Ovary (tissue), 10 donors: ENCODE measurements at regions of chr16 and their contacts with region 1.

Region 1: GRCh38 chr16:600781-601180 is 10.9 kb downstream of the RAB40C start:
- DNase-seq: no peak
- H3K4me3 ChIP-seq: no peak overlapping the region
- H3K27ac ChIP-seq: no peak overlapping the region
- H3K4me1 ChIP-seq: no peaks in the 10 kb centered on the region
- H3K27me3 ChIP-seq: no peaks in the 10 kb centered on the region
- CTCF ChIP-seq: no peak
- EP300 ChIP-seq: no peak
- POLR2A ChIP-seq: no peak

Region 2: GRCh38 chr16:273573-273981 is 327.2 kb before region 1 on chr16:
- intact Hi-C with region 1: loop called in 1 of 4 experiments (anchors 5 kb)
- DNase-seq: no peak
- H3K4me3 ChIP-seq: no peak overlapping the region
- H3K27ac ChIP-seq: no peak overlapping the region
- H3K4me1 ChIP-seq: no peaks in the 10 kb centered on the region
- H3K27me3 ChIP-seq: no peaks in the 10 kb centered on the region
- CTCF ChIP-seq: no peak
- EP300 ChIP-seq: no peak
- POLR2A ChIP-seq: no peak

Region 3: GRCh38 chr16:361872-362701 is 238.7 kb before region 1 on chr16:
- intact Hi-C with region 1: no loop called
- DNase-seq: peak; percentile 61 to 78 (median 72)
- H3K4me3 ChIP-seq: no peak overlapping the region
- H3K27ac ChIP-seq: no peak overlapping the region
- H3K4me1 ChIP-seq: no peaks in the 10 kb centered on the region
- H3K27me3 ChIP-seq: no peaks in the 10 kb centered on the region
- CTCF ChIP-seq: peak in 2 of 3 donors; percentile 37 to 51
- EP300 ChIP-seq: no peak
- POLR2A ChIP-seq: no peak

Region 4: GRCh38 chr16:745739-746138 is 145.0 kb after region 1 on chr16:
- intact Hi-C with region 1: no loop called
- DNase-seq: no peak
- H3K4me3 ChIP-seq: no peak overlapping the region
- H3K27ac ChIP-seq: no peak overlapping the region
- H3K4me1 ChIP-seq: peaks cover 2% of the 10 kb centered on the region
- H3K27me3 ChIP-seq: no peaks in the 10 kb centered on the region
- CTCF ChIP-seq: no peak
- EP300 ChIP-seq: no peak
- POLR2A ChIP-seq: no peak